ENCODE measurements at regions of chr11 and their contacts with region 1.

Region 1: GRCh38 chr11:76919887-76920746 is 59.4 kb downstream of the ACER3 start:
- DNase-seq: peak; percentile 48
- ATAC-seq: peak; percentile 85
- H3K4me3 Mint-ChIP-seq: no peak overlapping the region
- H3K27ac Mint-ChIP-seq: no peak overlapping the region
- H3K4me1 Mint-ChIP-seq: peaks cover 14% of the 10 kb centered on the region
- H3K27me3 Mint-ChIP-seq: no peaks in the 10 kb centered on the region
- CTCF ChIP-seq: peak; percentile 78

Region 2: GRCh38 chr11:76680518-76681425 is 239.3 kb before region 1 on chr11:
- CTCF ChIA-PET with region 1: no interaction called
- POLR2A ChIA-PET with region 1: no interaction called
- DNase-seq: peak; percentile 88
- ATAC-seq: peak; percentile 95
- H3K4me3 Mint-ChIP-seq: no peak overlapping the region
- H3K27ac Mint-ChIP-seq: no peak overlapping the region
- H3K4me1 Mint-ChIP-seq: no peaks in the 10 kb centered on the region
- H3K27me3 Mint-ChIP-seq: peaks cover 4% of the 10 kb centered on the region; the same call in 1 of the 2 replicates
- CTCF ChIP-seq: peak; percentile 75

Region 3: DNA sequence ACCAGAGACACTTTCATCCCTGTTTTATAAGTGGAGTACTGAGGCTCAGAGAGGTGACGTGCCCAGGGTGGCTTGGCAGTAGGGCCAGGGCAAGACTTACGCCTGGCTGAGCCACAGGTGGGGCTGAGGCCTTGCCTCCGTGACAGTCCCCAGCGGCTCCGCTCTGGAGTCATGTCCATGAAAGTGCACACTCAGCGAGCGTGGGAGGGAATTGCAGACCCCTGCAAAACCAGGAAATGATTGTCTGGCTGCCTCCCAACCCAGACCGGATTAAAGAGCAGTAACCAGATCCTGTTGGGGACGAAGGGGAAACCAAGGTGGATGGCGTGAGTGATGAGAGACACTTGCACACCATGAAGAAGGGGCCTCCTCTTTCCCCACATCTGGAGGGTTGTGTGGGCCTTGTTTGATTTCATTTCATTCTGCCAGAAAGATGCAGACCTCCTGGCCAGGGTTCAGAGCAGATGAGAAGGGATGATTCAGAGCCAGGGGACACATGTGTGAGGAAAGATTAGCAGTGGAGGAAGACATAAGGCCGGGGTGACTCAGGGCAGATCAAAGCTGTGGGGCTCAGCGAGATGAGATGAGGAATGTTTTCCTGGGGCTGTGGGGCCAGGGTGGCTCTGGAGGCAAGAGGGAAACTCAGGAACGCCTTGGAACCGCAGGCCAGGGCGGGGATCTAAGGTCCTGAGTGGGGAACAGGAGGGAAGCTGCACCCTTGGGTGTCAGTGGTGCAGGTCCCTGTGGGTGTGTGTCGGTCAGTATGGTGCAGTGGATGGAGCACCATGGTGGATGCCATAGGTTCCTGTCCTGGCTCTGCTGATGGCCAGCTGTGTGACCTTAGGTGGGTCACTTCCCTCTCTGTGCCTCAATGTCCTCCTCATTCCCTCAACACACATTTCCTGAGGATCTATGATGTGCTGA is 219.7 kb before region 1 on chr11:
- CTCF ChIA-PET with region 1: interaction called, 12 read pairs
- POLR2A ChIA-PET with region 1: no interaction called
- DNase-seq: no peak
- ATAC-seq: no peak
- H3K4me3 Mint-ChIP-seq: no peak overlapping the region
- H3K27ac Mint-ChIP-seq: no peak overlapping the region
- H3K4me1 Mint-ChIP-seq: peaks cover 47% of the 10 kb centered on the region
- H3K27me3 Mint-ChIP-seq: no peaks in the 10 kb centered on the region
- CTCF ChIP-seq: no peak

Region 4: DNA sequence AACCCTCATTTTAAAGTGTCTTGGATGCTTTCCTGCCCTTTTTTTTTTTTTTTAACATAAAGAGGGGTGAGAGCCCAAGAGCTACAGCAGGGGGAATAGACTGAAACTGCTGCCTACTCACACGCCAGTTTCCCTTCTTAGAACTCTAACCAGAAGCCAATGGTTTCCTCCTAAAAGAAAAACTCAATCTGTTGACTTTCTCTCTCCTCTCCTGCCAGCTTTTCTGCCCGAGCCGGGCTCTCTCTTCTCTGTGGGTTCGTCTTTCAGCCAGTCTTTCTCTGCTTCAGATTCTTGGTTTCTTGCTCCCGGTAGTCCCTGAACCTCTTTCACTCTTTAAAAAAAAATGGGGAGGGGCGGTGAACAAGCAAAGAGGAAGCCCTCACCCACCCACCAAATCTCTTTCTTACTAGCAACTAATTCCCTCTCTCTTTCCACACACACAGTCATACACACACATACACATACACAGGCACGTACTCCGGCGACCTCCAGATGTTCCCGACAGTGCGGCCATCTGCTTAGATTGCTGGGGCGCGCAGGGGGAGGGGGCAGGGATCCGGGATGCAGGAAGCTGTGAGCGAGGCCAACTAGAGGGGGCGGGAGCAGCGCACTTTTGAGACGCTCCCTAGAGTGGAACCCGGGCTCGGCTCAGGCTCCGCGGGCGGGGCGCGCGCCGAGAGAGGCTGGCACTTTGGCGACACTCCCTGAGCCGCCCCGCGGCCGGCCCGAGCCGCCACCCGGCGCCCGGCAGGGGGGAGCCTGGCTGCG is 137.4 kb before region 1 on chr11:
- CTCF ChIA-PET with region 1: interaction called, 17 read pairs
- POLR2A ChIA-PET with region 1: no interaction called
- DNase-seq: peak; percentile 95
- ATAC-seq: peak; percentile 57
- H3K4me3 Mint-ChIP-seq: peak overlapping the region; percentile 84
- H3K27ac Mint-ChIP-seq: peak overlapping the region; percentile 88
- H3K4me1 Mint-ChIP-seq: peaks cover 64% of the 10 kb centered on the region
- H3K27me3 Mint-ChIP-seq: peaks cover 15% of the 10 kb centered on the region
- CTCF ChIP-seq: no peak

Region 5: GRCh38 chr11:76841923-76842452 is 78.1 kb before region 1 on chr11:
- CTCF ChIA-PET with region 1: interaction called, 13 read pairs
- POLR2A ChIA-PET with region 1: no interaction called
- DNase-seq: no peak
- ATAC-seq: peak; percentile 19; the same call in 1 of the 2 replicates
- H3K4me3 Mint-ChIP-seq: no peak overlapping the region
- H3K27ac Mint-ChIP-seq: no peak overlapping the region
- H3K4me1 Mint-ChIP-seq: peaks cover 13% of the 10 kb centered on the region
- H3K27me3 Mint-ChIP-seq: peaks cover 3% of the 10 kb centered on the region; the same call in 1 of the 2 replicates
- CTCF ChIP-seq: no peak

Region 6: DNA sequence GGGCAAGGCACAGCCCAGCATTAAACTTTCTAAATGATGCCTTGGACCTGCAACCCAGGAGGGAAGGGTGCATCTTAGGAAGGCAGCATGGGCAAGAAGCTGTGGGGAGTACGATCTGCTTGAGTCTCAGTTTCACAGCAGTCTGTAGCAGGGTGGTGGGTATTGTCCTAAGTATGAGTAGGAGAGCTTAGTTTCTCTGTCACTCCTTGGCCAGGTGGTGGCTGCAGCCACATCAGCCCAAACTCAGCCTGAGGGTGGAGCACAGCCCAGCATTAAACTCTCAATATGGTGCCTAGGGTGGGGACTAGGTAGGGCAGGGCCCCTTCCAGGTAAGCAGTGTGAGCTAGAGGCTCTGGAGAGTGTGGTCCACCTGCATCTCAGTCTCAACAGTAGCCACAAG is 26.1 kb after region 1 on chr11:
- CTCF ChIA-PET with region 1: interaction called, 12 read pairs
- POLR2A ChIA-PET with region 1: no interaction called
- DNase-seq: no peak
- ATAC-seq: no peak
- H3K4me3 Mint-ChIP-seq: no peak overlapping the region
- H3K27ac Mint-ChIP-seq: no peak overlapping the region
- H3K4me1 Mint-ChIP-seq: peaks cover 26% of the 10 kb centered on the region
- H3K27me3 Mint-ChIP-seq: no peaks in the 10 kb centered on the region
- CTCF ChIP-seq: no peak

Region 7: DNA sequence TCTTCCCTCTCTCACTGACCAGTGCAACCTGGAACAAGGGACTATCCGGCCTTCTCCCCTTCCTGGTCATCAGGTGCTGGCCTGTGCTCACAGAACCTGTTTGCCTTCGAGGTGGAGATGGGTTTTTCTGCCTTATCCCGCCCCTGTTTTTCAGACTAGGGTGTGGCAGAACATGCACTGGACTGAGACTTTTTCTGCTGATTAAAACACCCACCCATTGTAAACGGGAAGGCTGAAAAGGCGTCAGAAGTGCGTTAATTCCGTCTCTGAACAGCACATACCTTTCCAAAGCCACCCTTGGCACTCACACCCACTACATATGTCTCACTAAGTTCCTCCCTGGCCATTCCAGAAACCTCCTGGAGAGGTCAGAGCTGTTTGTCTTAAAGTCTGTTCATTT is 109.7 kb after region 1 on chr11:
- CTCF ChIA-PET with region 1: interaction called, 86 read pairs
- POLR2A ChIA-PET with region 1: no interaction called
- DNase-seq: no peak
- ATAC-seq: no peak
- H3K4me3 Mint-ChIP-seq: no peak overlapping the region
- H3K27ac Mint-ChIP-seq: no peak overlapping the region
- H3K4me1 Mint-ChIP-seq: peaks cover 7% of the 10 kb centered on the region
- H3K27me3 Mint-ChIP-seq: peaks cover 4% of the 10 kb centered on the region; the same call in 1 of the 2 replicates
- CTCF ChIP-seq: no peak

Region 8: DNA sequence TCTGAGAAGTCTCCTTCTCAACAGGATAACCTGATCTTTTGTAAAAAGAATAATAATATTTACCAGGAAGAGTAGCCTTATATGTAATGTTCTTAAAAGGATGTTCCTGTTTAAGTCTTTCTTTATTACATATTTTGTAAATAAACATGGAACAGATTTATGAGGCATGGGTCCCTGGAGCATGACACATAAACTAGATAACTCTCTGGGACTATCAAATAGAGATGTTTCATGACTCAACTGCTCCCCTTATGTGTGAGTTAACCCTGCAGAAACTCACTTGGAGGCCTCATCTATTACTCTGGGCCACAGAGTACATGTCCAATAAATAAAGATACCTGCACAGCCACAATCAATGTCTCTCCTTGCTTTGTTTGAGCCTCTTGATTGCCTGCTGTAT is 316.8 kb after region 1 on chr11:
- CTCF ChIA-PET with region 1: no interaction called
- POLR2A ChIA-PET with region 1: no interaction called
- DNase-seq: no peak
- ATAC-seq: no peak
- H3K4me3 Mint-ChIP-seq: no peak overlapping the region
- H3K27ac Mint-ChIP-seq: no peak overlapping the region
- H3K4me1 Mint-ChIP-seq: no peaks in the 10 kb centered on the region
- H3K27me3 Mint-ChIP-seq: no peaks in the 10 kb centered on the region
- CTCF ChIP-seq: no peak

Region 9: GRCh38 chr11:77250881-77251640 is 330.9 kb after region 1 on chr11:
- CTCF ChIA-PET with region 1: no interaction called
- POLR2A ChIA-PET with region 1: no interaction called
- DNase-seq: no peak
- ATAC-seq: no peak
- H3K4me3 Mint-ChIP-seq: no peak overlapping the region
- H3K27ac Mint-ChIP-seq: no peak overlapping the region
- H3K4me1 Mint-ChIP-seq: no peaks in the 10 kb centered on the region
- H3K27me3 Mint-ChIP-seq: no peaks in the 10 kb centered on the region
- CTCF ChIP-seq: no peak